ENCODE measurements at regions of chr1 and their contacts with region 1.

Region 1: GRCh38 chr1:21811875-21812305 is at the start of gene LDLRAD2:
- DNase-seq: no peak
- ATAC-seq: no peak
- H3K4me3 ChIP-seq: no peak within 1 kb of the TSS
- H3K4me3 Mint-ChIP-seq: no peak within 1 kb of the TSS
- H3K27ac ChIP-seq: no peak within 1 kb of the TSS
- H3K27ac Mint-ChIP-seq: peak within 1 kb of the TSS in 1 of 2 donors; percentile 7
- H3K4me1 ChIP-seq: peaks cover 0 to 10% of the 10 kb centered on the region in 2 experiments
- H3K4me1 Mint-ChIP-seq: peaks cover 2 to 7% (median 6%) of the 10 kb centered on the region in 3 donors
- H3K27me3 ChIP-seq: peaks cover 3 to 58% of the 10 kb centered on the region in 2 experiments
- H3K27me3 Mint-ChIP-seq: peaks cover 3 to 30% of the 10 kb centered on the region in 2 donors
- total RNA-seq, gene LDLRAD2: 0.07 to 0.13 TPM in 2 of 5 donors, not detected in the others

Region 2: GRCh38 chr1:22398656-22399420 is 586.9 kb after region 1 on chr1:
- CTCF ChIA-PET with region 1: no interaction called
- POLR2A ChIA-PET with region 1: interaction called in 1 of 2 experiments, 15 read pairs
- DNase-seq: peak in 10 of 35 experiments; percentile 1 to 45 (median 15)
- ATAC-seq: peak in 3 of 4 experiments; percentile 40 to 80 (median 57)
- H3K4me3 ChIP-seq: no peak overlapping the region
- H3K4me3 Mint-ChIP-seq: peak overlapping the region in 1 of 3 donors; percentile 15
- H3K27ac ChIP-seq: no peak overlapping the region
- H3K27ac Mint-ChIP-seq: no peak overlapping the region
- H3K4me1 ChIP-seq: peaks cover 14 to 16% of the 10 kb centered on the region in 2 experiments
- H3K4me1 Mint-ChIP-seq: peaks cover 26 to 33% (median 27%) of the 10 kb centered on the region in 3 donors
- H3K27me3 ChIP-seq: peaks cover 5 to 69% of the 10 kb centered on the region in 2 experiments
- H3K27me3 Mint-ChIP-seq: peaks cover 72 to 79% of the 10 kb centered on the region in 2 donors